Right ventricle myocardium superior (tissue), 1 donor: ENCODE measurements at regions of chr3 and their contacts with region 1.

Region 1: GRCh38 chr3:177816667-177817208 is 619.5 kb upstream of the TBL1XR1 start:
- DNase-seq: no peak
- ATAC-seq: peak; percentile 67

Region 2: DNA sequence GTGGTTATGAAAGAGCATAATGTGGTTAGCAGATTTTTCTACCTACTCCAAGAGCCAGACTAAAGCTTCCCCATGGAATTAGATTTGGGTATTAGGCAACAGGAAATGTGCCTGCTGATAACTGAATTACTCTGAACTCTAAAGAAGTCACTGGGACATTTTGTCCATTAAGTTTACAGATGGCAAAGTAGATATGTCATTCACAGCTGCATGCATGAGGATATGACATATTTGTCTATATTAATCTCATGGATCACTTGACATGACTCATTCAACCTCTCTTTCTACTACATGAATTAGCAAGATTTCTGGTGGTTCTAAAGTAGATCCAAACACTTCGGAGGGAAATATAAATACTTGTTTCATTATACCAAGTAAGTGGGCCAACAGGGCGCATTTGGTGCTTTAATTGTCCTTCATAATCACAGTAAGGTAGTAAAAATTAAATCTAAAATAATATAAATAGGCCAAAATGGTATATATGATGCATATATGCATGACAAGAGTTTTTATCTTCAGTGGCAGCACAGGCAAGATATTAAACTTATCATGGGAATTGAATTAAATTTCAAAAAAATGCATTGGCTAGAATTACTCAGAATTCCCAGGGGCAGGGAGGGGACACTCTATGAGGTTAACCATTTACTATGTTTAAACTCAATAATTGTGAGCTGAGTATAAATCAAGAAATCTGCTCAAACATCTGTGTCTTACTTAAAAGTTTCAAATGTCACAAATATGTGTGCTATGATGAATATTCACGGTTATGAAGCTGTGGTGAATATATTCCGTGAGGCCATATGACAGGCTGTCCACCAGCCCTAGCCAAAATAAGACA is 354.2 kb after region 1 on chr3:
- intact Hi-C with region 1: loop called (anchors 10 kb)
- DNase-seq: no peak
- ATAC-seq: peak; percentile 95